KBM-7 (cell line): ENCODE measurements at regions of chr2 and their contacts with region 1.

Region 1: GRCh38 chr2:37832590-37833197 is 92.4 kb upstream of the RMDN2 start:
- DNase-seq: peak; percentile 80

Region 2: DNA sequence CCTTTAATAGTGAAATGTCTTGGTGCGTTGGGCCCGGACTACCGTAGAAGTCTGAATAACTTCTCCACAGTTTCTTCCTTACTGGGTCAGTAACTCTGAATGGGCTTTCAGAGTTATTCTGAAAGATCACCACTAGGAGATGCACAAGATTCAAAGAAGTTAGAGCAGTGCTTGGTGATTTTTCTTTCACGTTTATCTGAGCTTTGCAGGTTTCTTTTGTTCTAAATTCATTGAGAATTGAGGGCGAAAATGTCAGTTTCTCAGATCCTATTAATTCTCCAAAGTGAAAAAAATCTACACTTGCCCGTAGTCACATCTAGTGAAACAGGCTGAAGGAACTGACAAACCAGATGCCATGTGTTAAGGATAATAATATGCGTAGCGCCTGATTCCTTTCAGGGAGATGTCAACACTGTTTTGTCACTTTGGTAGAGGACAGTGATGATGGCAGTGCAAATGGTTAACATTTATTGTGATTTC is 418.2 kb before region 1 on chr2:
- in situ Hi-C with region 1: loop called (anchors 25 kb)
- DNase-seq: peak; percentile 58

Region 3: DNA sequence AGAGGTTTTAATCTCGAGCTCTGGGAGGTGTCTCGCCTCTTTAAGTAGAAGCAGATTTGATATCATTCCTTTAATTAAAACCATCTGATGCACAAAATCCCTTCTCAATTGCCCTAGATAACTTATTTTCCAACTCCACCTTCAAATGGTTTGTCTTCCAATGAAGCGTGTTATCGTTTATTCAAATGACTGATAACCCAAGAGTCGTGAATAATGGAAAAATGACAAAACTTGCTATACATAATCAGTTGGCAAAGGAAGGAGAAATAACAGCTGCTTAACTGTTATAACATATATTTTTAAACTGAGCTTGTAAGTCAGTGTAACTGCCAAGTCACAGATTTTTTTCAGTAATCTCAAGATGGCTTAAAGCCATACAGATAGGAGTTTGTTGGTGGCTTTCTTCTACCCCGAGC is 343.6 kb before region 1 on chr2:
- in situ Hi-C with region 1: no loop called
- DNase-seq: no peak

Region 4: GRCh38 chr2:38224821-38225450 is 392.2 kb after region 1 on chr2:
- in situ Hi-C with region 1: no loop called
- DNase-seq: no peak